MCF 10A (cell line): ENCODE measurements at regions of chr7 and their contacts with region 1.

Region 1: DNA sequence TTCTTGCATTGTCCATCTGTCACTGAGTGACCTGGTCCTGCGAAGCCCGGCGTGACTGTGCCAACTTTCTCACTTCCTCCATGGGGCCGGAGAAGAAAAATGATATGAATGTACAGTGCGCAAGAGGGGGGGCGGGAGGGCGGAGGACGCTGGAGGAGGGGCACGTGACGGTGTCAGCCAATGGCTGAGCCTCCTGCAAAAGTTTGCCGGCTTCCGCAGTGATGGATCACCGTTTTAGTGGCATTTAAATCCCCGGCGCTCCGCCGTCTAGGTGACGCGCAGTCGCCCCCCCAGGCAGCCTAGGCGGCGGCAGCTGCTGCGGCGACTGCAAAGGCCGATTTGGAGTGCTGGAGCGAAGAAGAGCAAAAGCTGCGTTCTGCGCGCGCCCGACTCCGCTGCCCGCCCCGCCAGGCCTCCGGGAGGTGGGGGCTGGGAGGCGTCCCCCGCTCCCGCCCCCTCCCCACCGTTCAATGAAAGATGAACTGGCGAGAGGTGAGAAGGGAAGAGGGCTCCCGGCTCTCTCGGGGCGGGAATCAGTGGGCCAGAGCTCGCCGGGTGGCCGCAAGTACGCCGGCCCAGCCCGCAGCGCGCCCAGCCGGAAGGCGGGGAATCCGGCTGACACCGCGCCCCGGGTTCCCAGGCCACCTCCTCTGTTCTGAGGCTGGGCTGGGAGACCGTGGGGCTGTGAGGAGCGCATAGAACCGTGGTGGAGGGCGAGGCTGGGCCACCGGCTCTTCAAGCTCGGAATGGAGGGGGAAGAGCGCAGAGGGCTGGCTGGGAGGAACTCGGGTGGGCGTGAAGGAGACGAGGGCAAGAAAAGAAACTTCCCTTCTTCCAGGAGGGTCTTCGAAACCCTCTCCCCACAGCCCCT is at the start of gene HOXA1:
- DNase-seq: peak; percentile 93
- H3K4me3 Mint-ChIP-seq: peak within 1 kb of the TSS; percentile 83
- H3K27ac Mint-ChIP-seq: peak within 1 kb of the TSS; percentile 99
- H3K4me1 Mint-ChIP-seq: peaks cover 46% of the 10 kb centered on the region
- H3K27me3 Mint-ChIP-seq: no peaks in the 10 kb centered on the region
- CTCF ChIP-seq: no peak
- total RNA-seq, gene HOXA1: 5.6 and 7.1 TPM in 2 replicates

Region 2: DNA sequence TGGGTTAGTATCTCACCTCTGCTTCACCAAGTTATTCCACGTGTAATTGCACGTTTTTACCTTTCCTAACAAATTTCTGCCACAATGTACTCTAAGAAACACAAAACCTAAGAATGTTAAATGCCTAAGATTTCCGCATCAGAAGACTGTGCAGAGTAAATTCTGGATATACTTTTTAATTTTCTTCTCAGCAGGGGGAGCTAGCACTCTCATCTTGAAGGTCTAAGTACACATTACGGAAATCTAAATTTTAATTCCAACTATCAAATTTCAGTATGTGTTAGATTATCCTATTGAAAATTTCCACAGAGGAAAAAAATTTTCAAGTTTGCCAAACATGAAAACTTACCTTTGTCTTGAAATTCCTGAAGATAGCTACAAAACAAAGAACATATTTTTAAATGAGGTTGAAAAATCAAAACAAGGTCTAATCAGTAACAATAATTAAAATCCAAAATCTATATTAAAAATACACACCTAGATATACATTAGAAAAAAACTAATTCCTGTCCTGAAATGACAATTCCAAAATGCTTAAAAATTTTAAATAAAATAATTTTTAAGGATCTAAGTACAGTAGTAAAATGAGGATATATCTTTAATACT is 242.2 kb before region 1 on chr7:
- CTCF ChIA-PET with region 1: interaction called, 198 read pairs
- POLR2A ChIA-PET with region 1: interaction called, 663 read pairs
- intact Hi-C with region 1: loop called (anchors 1 kb)
- DNase-seq: peak; percentile 78
- H3K4me3 Mint-ChIP-seq: peak overlapping the region; percentile 17
- H3K27ac Mint-ChIP-seq: peak overlapping the region; percentile 96
- H3K4me1 Mint-ChIP-seq: peaks cover 33% of the 10 kb centered on the region
- H3K27me3 Mint-ChIP-seq: no peaks in the 10 kb centered on the region
- CTCF ChIP-seq: peak; percentile 52

Region 3: GRCh38 chr7:26958834-26959233 is 137.3 kb before region 1 on chr7:
- CTCF ChIA-PET with region 1: interaction called, 3 read pairs
- POLR2A ChIA-PET with region 1: interaction called, 6 read pairs
- intact Hi-C with region 1: loop called (anchors 5 kb)
- DNase-seq: peak; percentile 85
- H3K4me3 Mint-ChIP-seq: no peak overlapping the region
- H3K27ac Mint-ChIP-seq: no peak overlapping the region
- H3K4me1 Mint-ChIP-seq: peaks cover 14% of the 10 kb centered on the region
- H3K27me3 Mint-ChIP-seq: no peaks in the 10 kb centered on the region
- CTCF ChIP-seq: no peak

Region 4: GRCh38 chr7:27112955-27113949 is 17.1 kb after region 1 on chr7:
- CTCF ChIA-PET with region 1: interaction called, 11 read pairs
- POLR2A ChIA-PET with region 1: interaction called, 485 read pairs
- intact Hi-C with region 1: loop called (anchors 1 kb)
- DNase-seq: peak; percentile 93
- H3K4me3 Mint-ChIP-seq: peak overlapping the region; percentile 80
- H3K27ac Mint-ChIP-seq: peak overlapping the region; percentile 90
- H3K4me1 Mint-ChIP-seq: peaks cover 25% of the 10 kb centered on the region
- H3K27me3 Mint-ChIP-seq: no peaks in the 10 kb centered on the region
- CTCF ChIP-seq: no peak

Region 5: DNA sequence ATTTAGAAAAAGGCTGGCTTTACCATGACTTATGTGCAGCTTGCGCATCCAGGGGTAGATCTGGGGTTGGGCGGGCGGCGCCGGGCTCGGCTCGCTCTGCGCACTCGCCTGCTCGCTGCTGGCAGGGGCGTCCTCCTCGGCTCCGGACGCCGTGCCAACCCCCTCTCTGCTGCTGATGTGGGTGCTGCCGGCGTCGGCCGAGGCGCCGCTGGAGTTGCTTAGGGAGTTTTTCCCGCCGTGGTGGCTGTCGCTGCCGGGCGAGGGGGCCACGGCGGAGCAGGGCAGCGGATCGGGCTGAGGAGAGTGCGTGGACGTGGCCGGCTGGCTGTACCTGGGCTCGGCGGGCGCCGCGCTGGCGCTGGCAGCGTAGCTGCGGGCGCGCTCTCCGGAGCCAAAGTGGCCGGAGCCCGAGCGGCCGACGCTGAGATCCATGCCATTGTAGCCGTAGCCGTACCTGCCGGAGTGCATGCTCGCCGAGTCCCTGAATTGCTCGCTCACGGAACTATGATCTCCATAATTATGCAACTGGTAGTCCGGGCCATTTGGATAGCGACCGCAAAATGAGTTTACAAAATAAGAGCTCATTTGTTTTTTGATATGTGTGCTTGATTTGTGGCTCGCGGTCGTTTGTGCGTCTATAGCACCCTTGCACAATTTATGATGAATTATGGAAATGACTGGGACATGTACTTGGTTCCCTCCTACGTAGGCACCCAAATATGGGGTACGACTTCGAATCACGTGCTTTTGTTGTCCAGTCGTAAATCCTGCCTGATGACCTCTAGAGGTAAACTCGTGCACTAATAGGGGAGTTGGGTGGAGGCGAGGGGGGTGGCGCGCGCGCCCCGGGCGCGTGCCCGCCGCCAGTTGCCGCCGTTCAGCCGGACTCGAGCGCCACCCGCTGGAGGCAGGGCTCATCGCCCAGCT is 47.2 kb after region 1 on chr7 and contains the start of gene HOXA5:
- CTCF ChIA-PET with region 1: interaction called, 18 read pairs
- POLR2A ChIA-PET with region 1: interaction called, 196 read pairs
- intact Hi-C with region 1: no loop called
- DNase-seq: peak; percentile 99
- H3K4me3 Mint-ChIP-seq: peak within 1 kb of the TSS; percentile 100
- H3K27ac Mint-ChIP-seq: peak within 1 kb of the TSS; percentile 99
- H3K4me1 Mint-ChIP-seq: peaks cover 31% of the 10 kb centered on the region
- H3K27me3 Mint-ChIP-seq: no peaks in the 10 kb centered on the region
- CTCF ChIP-seq: peak; percentile 93
- total RNA-seq, gene HOXA5: 7.4 and 8.8 TPM in 2 replicates

Region 6: GRCh38 chr7:27172823-27173510 is 76.8 kb after region 1 on chr7:
- CTCF ChIA-PET with region 1: no interaction called
- POLR2A ChIA-PET with region 1: interaction called, 42 read pairs
- intact Hi-C with region 1: no loop called
- DNase-seq: peak; percentile 55
- H3K4me3 Mint-ChIP-seq: peak overlapping the region; percentile 79
- H3K27ac Mint-ChIP-seq: peak overlapping the region; percentile 87
- H3K4me1 Mint-ChIP-seq: peaks cover 20% of the 10 kb centered on the region
- H3K27me3 Mint-ChIP-seq: no peaks in the 10 kb centered on the region
- CTCF ChIP-seq: no peak